PC-3 (cell line): ENCODE measurements at regions of chr7 and their contacts with region 1.

Region 1: DNA sequence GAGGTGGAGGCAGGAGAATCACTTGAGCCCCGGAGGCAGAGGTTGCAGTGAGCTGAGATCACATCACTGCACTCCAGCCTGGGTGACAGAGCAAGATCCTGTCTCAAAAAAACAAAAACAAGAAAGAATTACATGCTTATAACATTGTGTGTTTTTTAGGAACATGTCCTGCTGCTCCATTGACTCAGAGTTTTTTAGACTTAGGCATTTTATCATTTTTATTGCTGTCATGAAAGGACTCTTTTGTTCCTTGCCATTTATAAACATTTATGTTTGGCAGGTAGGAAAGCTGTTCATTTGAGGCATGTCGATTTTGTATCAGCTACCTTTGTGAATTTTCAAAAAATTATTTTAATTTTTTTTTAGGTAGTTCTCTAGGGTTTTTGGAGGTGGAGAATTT is 20.3 kb downstream of the COL26A1 start:
- DNase-seq: no peak
- ATAC-seq: no peak
- H3K4me3 ChIP-seq: no peak overlapping the region
- H3K27ac ChIP-seq: no peak overlapping the region
- H3K4me1 ChIP-seq: no peaks in the 10 kb centered on the region
- H3K27me3 ChIP-seq: no peaks in the 10 kb centered on the region
- CTCF ChIP-seq: no peak

Region 2: GRCh38 chr7:101342892-101343291 is 40.0 kb before region 1 on chr7:
- CTCF ChIA-PET with region 1: no interaction called
- POLR2A ChIA-PET with region 1: no interaction called
- intact Hi-C with region 1: no loop called
- DNase-seq: no peak
- ATAC-seq: no peak
- H3K4me3 ChIP-seq: no peak overlapping the region
- H3K27ac ChIP-seq: no peak overlapping the region
- H3K4me1 ChIP-seq: no peaks in the 10 kb centered on the region
- H3K27me3 ChIP-seq: no peaks in the 10 kb centered on the region
- CTCF ChIP-seq: no peak

Region 3: GRCh38 chr7:101363734-101364374 is 19.1 kb before region 1 on chr7:
- CTCF ChIA-PET with region 1: no interaction called
- POLR2A ChIA-PET with region 1: no interaction called
- intact Hi-C with region 1: no loop called
- DNase-seq: peak; percentile 65
- ATAC-seq: peak; percentile 95
- H3K4me3 ChIP-seq: peak overlapping the region; percentile 69
- H3K27ac ChIP-seq: no peak overlapping the region
- H3K4me1 ChIP-seq: no peaks in the 10 kb centered on the region
- H3K27me3 ChIP-seq: no peaks in the 10 kb centered on the region
- CTCF ChIP-seq: peak; percentile 81

Region 4: GRCh38 chr7:102326157-102326889 is 943.4 kb after region 1 on chr7:
- CTCF ChIA-PET with region 1: no interaction called
- POLR2A ChIA-PET with region 1: interaction called, 15 read pairs
- intact Hi-C with region 1: no loop called
- DNase-seq: no peak
- ATAC-seq: no peak
- H3K4me3 ChIP-seq: no peak overlapping the region
- H3K27ac ChIP-seq: no peak overlapping the region
- H3K4me1 ChIP-seq: no peaks in the 10 kb centered on the region
- H3K27me3 ChIP-seq: no peaks in the 10 kb centered on the region
- CTCF ChIP-seq: no peak